Activated CD4-positive, alpha-beta T cell treated with anti-CD3 and anti-CD28 coated beads, Interleukin-2, amount 10 ng/mL, durations not matched to agents 24 days and 14 days (primary cell): ENCODE measurements at regions of chr4 and their contacts with region 1.

Region 1: GRCh38 chr4:140153718-140154571 is at the start of gene MAML3:
- DNase-seq: peak; percentile 94
- H3K4me3 Mint-ChIP-seq: peak within 1 kb of the TSS; percentile 92
- H3K27ac Mint-ChIP-seq: peak within 1 kb of the TSS; percentile 81
- H3K4me1 Mint-ChIP-seq: peaks cover 34% of the 10 kb centered on the region
- H3K27me3 Mint-ChIP-seq: peaks cover 60% of the 10 kb centered on the region
- total RNA-seq, gene MAML3: 0.52 and 0.54 TPM in 2 replicates

Region 2: DNA sequence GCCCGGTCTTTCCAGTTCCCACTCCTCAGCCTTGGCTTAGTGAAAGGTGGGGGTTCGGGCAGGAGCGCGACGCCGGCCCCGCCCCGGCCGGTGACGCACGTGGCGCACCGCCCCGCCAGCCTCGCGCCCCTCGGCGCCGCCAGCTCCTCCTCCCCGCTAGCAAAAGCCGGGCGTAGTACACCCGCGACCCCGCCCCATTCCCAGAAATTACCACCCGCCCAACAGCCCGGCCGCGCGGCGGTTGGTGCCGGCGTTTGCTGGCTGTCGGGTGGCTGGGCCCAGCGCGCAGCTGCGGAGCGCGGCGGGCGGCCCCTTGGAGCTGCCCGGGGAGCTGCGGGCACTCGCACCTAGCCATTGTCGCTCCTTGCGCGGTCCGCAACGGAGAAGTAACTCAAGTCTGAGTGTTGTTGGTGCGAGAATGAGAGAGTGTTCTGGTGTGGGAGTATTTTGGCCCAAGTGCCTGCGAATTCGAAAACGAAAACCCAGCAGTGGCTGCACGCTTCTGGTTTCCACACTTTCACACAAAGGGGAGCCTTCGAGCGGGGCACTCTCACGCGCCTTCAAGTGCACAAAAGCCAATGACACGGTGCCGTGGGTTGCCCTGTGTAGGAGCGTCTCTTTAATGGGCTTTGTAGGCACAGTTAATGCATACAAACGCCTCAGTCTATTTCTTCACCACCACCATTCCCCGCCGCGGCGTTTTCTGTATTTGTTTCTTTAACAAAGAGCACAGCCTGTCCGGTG is 975.9 kb before region 1 on chr4:
- intact Hi-C with region 1: loop called (anchors 5 kb)
- DNase-seq: peak; percentile 100
- H3K4me3 Mint-ChIP-seq: peak overlapping the region; percentile 94
- H3K27ac Mint-ChIP-seq: peak overlapping the region; percentile 97
- H3K4me1 Mint-ChIP-seq: peaks cover 28% of the 10 kb centered on the region
- H3K27me3 Mint-ChIP-seq: peaks cover 29% of the 10 kb centered on the region

Region 3: GRCh38 chr4:139734875-139735380 is 419.0 kb before region 1 on chr4:
- intact Hi-C with region 1: loop called (anchors 5 kb)
- DNase-seq: peak; percentile 86
- H3K4me3 Mint-ChIP-seq: peak overlapping the region; percentile 76
- H3K27ac Mint-ChIP-seq: peak overlapping the region; percentile 43
- H3K4me1 Mint-ChIP-seq: peaks cover 7% of the 10 kb centered on the region
- H3K27me3 Mint-ChIP-seq: peaks cover 53% of the 10 kb centered on the region

Region 4: GRCh38 chr4:140012688-140013486 is 141.1 kb before region 1 on chr4:
- intact Hi-C with region 1: loop called (anchors 5 kb)
- DNase-seq: peak; percentile 86
- H3K4me3 Mint-ChIP-seq: no peak overlapping the region
- H3K27ac Mint-ChIP-seq: no peak overlapping the region
- H3K4me1 Mint-ChIP-seq: peaks cover 6% of the 10 kb centered on the region
- H3K27me3 Mint-ChIP-seq: peaks cover 34% of the 10 kb centered on the region

Region 5: DNA sequence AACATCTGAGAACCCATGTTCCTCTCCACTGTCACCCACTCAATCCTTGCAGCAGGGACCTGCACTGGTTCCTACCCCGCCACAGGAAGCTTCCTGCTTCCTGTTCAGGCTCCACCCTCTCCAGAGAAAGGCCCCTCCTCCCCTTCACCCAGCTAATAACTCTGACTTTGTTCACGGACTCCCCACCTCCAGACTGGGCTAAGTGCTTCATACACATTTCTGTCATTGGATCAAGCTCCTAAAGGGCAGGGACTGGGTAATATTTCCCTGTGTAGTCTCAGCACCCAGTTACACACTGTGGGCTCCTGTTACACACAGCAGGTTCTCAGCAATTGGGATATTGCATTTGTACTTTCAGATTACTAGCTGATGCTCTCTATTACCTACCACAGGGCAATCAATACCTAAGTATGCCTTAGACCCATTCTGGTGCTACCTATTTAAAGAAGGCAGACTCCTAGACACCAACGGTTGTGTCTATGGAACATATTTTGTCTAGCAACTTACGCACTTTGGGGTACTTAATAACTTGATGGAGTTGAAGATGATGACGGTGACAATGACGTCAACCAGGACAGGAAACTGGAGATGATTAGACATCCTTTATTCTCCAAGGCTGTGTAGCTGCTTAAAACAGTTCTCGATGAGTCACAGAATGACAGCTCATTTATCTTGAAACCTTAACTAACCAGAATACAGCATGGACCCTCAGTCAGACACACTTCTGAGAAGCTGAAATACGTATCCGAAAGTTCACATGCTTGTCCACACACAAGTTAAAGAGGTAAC is 58.1 kb before region 1 on chr4:
- intact Hi-C with region 1: loop called (anchors 1 kb)
- DNase-seq: peak; percentile 88
- H3K4me3 Mint-ChIP-seq: peak overlapping the region; percentile 86
- H3K27ac Mint-ChIP-seq: peak overlapping the region; percentile 94
- H3K4me1 Mint-ChIP-seq: peaks cover 72% of the 10 kb centered on the region
- H3K27me3 Mint-ChIP-seq: peaks cover 4% of the 10 kb centered on the region

Region 6: GRCh38 chr4:140133576-140133975 is 20.4 kb before region 1 on chr4:
- intact Hi-C with region 1: loop called (anchors 2 kb)
- DNase-seq: no peak
- H3K4me3 Mint-ChIP-seq: no peak overlapping the region
- H3K27ac Mint-ChIP-seq: no peak overlapping the region
- H3K4me1 Mint-ChIP-seq: peaks cover 17% of the 10 kb centered on the region
- H3K27me3 Mint-ChIP-seq: peaks cover 42% of the 10 kb centered on the region

Region 7: GRCh38 chr4:140373328-140374129 is 219.6 kb after region 1 on chr4 and contains the start of gene SCOC:
- intact Hi-C with region 1: loop called (anchors 5 kb)
- DNase-seq: peak; percentile 99
- H3K4me3 Mint-ChIP-seq: no peak within 1 kb of the TSS
- H3K27ac Mint-ChIP-seq: peak within 1 kb of the TSS; percentile 65
- H3K4me1 Mint-ChIP-seq: peaks cover 24% of the 10 kb centered on the region
- H3K27me3 Mint-ChIP-seq: no peaks in the 10 kb centered on the region
- total RNA-seq, gene SCOC: 33.7 and 33.8 TPM in 2 replicates